ENCODE measurements at regions of chr1 and their contacts with region 1.

Region 1: GRCh38 chr1:235614442-235614954 is 35.1 kb downstream of the GNG4 start:
- DNase-seq: no peak
- H3K4me3 Mint-ChIP-seq: no peak overlapping the region
- H3K27ac Mint-ChIP-seq: no peak overlapping the region
- H3K4me1 Mint-ChIP-seq: peaks cover 6% of the 10 kb centered on the region
- H3K27me3 Mint-ChIP-seq: no peaks in the 10 kb centered on the region
- CTCF ChIP-seq: no peak

Region 2: GRCh38 chr1:235632506-235633401 is 18.3 kb after region 1 on chr1:
- CTCF ChIA-PET with region 1: interaction called, 7 read pairs
- POLR2A ChIA-PET with region 1: interaction called, 15 read pairs
- intact Hi-C with region 1: no loop called
- DNase-seq: peak; percentile 71
- H3K4me3 Mint-ChIP-seq: peak overlapping the region; percentile 69
- H3K27ac Mint-ChIP-seq: peak overlapping the region; percentile 72
- H3K4me1 Mint-ChIP-seq: peaks cover 13% of the 10 kb centered on the region
- H3K27me3 Mint-ChIP-seq: no peaks in the 10 kb centered on the region
- CTCF ChIP-seq: no peak

Measured in MCF 10A (cell line).